Panc1 (cell line): ENCODE measurements at regions of chr10 and their contacts with region 1.

Region 1: GRCh38 chr10:101067356-101068083 is 5.7 kb downstream of the KAZALD1 start:
- DNase-seq: no peak
- ATAC-seq: peak; percentile 64
- H3K4me3 ChIP-seq: peak overlapping the region; percentile 64 to 94
- H3K27ac ChIP-seq: peak overlapping the region; percentile 91
- H3K4me1 ChIP-seq: peaks cover 34% of the 10 kb centered on the region
- H3K27me3 ChIP-seq: no peaks in the 10 kb centered on the region
- CTCF ChIP-seq: peak; percentile 95

Region 2: GRCh38 chr10:100600218-100600617 is 467.3 kb before region 1 on chr10:
- CTCF ChIA-PET with region 1: no interaction called
- POLR2A ChIA-PET with region 1: no interaction called
- in situ Hi-C with region 1: no loop called
- intact Hi-C with region 1: no loop called
- DNase-seq: no peak
- ATAC-seq: no peak
- H3K4me3 ChIP-seq: no peak overlapping the region
- H3K27ac ChIP-seq: no peak overlapping the region
- H3K4me1 ChIP-seq: no peaks in the 10 kb centered on the region
- H3K27me3 ChIP-seq: peaks cover 5% of the 10 kb centered on the region
- CTCF ChIP-seq: no peak

Region 3: DNA sequence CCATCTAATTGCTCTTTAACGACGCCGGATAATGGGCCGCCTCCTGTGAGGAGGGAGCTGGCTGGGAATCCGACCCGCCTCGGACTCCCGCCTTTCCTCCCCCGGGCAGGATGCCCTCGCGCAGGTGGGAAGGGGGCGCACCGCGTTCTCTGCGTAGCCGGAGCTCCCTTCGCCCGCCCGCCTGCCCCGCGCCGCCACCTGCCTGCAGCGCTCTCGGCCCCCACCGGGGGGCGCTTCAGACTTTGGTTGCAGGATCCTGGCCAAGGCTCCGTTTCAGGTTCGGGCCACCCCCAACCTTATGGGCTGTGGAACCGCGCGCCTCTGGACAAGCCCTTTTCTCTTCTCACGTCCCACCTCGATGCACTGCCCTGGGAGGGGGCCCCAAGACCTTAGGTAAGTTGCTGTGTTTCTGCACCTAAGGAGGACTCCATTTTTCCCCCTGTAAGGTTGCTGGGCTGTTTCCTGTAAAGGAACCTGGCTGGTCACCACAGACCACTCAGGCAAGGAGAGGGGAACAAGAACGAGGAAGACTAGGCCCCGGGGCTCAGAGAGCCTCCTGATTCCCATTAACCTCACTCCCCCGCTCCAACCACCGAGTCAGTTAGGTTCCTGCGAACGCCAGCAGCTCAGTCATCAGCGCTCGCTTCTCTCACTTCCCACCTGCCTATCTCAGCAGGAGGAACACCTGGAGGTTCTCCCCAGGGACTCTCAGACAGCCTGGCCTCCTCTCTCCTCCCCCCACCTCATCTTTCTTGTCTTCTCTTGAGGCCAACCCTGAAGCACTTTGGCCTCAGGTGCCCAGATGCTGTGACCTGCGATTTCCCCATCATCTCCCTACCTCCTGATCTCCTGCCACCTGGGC is 17.1 kb before region 1 on chr10:
- CTCF ChIA-PET with region 1: interaction called, 19 read pairs
- POLR2A ChIA-PET with region 1: no interaction called
- in situ Hi-C with region 1: no loop called
- intact Hi-C with region 1: no loop called
- DNase-seq: no peak
- ATAC-seq: peak; percentile 87
- H3K4me3 ChIP-seq: peak overlapping the region; percentile 27 to 57
- H3K27ac ChIP-seq: peak overlapping the region; percentile 64; the same call in 1 of the 2 replicates
- H3K4me1 ChIP-seq: peaks cover 24% of the 10 kb centered on the region
- H3K27me3 ChIP-seq: no peaks in the 10 kb centered on the region
- CTCF ChIP-seq: peak; percentile 99